Sigmoid colon (tissue), 7 donors: ENCODE measurements at regions of chr22 and their contacts with region 1.

Region 1: GRCh38 chr22:41132550-41132949 is 40.2 kb downstream of the EP300 start:
- DNase-seq: no peak
- H3K4me3 ChIP-seq: no peak overlapping the region
- H3K27ac ChIP-seq: no peak overlapping the region
- H3K4me1 ChIP-seq: no peaks in the 10 kb centered on the region
- H3K27me3 ChIP-seq: no peaks in the 10 kb centered on the region
- CTCF ChIP-seq: no peak
- EP300 ChIP-seq: no peak
- POLR2A ChIP-seq: no peak

Region 2: GRCh38 chr22:40844951-40845350 is 287.6 kb before region 1 on chr22:
- intact Hi-C with region 1: loop called (anchors 10 kb)
- DNase-seq: no peak
- H3K4me3 ChIP-seq: no peak overlapping the region
- H3K27ac ChIP-seq: no peak overlapping the region
- H3K4me1 ChIP-seq: peaks cover 0 to 15% (median 9%) of the 10 kb centered on the region in 4 donors
- H3K27me3 ChIP-seq: no peaks in the 10 kb centered on the region
- CTCF ChIP-seq: no peak
- EP300 ChIP-seq: no peak
- POLR2A ChIP-seq: no peak

Region 3: GRCh38 chr22:41334215-41334614 is 201.7 kb after region 1 on chr22:
- intact Hi-C with region 1: no loop called
- DNase-seq: no peak
- H3K4me3 ChIP-seq: no peak overlapping the region
- H3K27ac ChIP-seq: no peak overlapping the region
- H3K4me1 ChIP-seq: no peaks in the 10 kb centered on the region
- H3K27me3 ChIP-seq: no peaks in the 10 kb centered on the region
- CTCF ChIP-seq: no peak
- EP300 ChIP-seq: no peak
- POLR2A ChIP-seq: no peak